Activated CD8-positive, alpha-beta T cell treated with anti-CD3 and anti-CD28 coated beads, Interleukin-2, amount 10 ng/mL, durations not matched to agents 7 days and 5 days (primary cell): ENCODE measurements at regions of chr17 and their contacts with region 1.

Region 1: DNA sequence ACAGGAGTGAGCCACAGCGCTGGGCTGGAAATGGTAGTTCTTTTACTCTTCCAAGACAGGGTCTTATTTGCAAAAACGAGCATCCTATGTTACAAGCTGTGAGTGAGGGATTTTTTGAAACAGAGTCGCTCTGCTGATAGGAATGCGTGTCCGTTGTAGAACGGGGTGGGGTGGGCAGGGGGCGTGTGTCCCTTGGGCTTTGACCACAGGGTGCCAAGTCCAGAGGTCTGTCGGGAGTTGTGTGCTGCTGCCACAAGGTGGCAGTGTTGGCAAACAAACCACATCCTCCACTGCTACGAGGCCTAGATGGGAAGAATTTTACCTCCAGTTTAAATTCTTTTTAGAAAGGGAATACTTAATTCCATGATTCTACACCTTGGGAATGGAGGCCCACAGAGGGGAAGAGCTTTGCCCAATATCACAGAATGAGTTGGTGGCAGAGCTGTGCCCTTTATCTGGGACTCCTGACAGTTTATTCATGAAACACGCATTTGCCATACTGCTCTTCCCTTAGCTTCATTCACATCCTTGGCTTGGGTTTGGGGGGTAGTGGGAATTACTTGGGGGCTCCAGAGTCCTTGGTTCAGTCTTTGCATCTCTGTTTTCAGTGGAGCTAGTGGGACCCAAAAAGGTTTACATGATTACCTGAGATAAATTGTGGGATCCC is 30.6 kb upstream of the ETV4 start:
- DNase-seq: peak; percentile 74
- ATAC-seq: peak; percentile 83
- H3K4me3 Mint-ChIP-seq: no peak overlapping the region
- H3K27ac Mint-ChIP-seq: no peak overlapping the region
- H3K4me1 Mint-ChIP-seq: peaks cover 24% of the 10 kb centered on the region
- H3K27me3 Mint-ChIP-seq: peaks cover 4% of the 10 kb centered on the region

Region 2: DNA sequence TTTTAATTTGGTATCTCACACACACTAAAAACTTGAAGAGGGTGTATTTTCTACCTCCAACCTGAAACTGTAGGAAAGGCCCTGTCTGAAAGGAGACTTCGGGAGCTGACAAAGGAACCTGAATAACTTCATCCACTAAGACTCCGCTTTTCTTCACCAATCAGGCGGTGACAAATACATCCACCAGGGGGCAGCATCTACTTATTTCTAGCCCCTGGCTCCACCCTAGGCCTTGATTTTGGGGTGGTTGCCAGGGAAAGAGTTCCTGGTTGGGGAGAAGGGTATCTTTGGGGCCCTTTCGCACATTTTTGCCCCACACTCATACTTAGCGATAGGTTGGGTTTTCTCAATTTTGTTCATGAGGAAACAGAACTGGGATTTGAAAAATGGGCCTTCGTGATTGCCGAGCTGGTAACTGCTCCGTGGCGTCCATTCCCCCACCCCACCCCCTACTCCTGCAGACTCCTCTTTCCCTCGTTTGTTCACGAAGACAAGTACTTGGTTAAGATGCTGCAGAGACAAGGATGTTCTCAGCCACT is 182.7 kb before region 1 on chr17:
- CTCF ChIA-PET with region 1: interaction called, 10 read pairs
- POLR2A ChIA-PET with region 1: no interaction called
- DNase-seq: peak; percentile 95
- ATAC-seq: peak; percentile 61
- H3K4me3 Mint-ChIP-seq: no peak overlapping the region
- H3K27ac Mint-ChIP-seq: peak overlapping the region; percentile 10
- H3K4me1 Mint-ChIP-seq: peaks cover 47% of the 10 kb centered on the region
- H3K27me3 Mint-ChIP-seq: no peaks in the 10 kb centered on the region

Region 3: DNA sequence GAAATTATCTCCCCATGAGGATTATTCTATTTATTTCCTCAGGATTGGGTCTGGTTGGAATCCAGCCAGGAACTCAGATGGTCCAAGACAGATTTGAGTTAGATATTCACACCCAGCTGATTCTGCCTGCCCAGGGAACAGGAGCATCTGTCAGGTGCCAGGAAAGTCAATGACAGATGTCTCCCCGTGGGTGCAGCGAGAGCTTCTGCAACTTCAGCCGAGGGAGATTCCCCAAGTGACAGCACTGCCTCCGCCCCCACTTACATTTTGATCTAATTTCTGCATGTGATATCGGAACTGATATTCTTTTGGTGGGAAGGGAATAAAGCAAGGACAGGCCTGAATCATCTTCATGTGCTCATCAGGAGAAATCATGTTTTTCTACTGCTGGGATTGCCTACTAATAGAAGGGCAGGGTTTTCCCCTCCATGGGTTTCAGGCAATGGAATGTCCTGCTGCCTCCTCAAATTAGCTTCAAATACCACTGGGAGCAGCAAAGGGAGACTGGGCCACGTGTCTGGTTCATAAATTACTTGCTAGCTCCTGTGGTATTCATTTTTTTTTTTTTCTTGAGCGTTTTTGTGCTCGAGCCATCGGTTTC is 108.6 kb before region 1 on chr17:
- CTCF ChIA-PET with region 1: no interaction called
- POLR2A ChIA-PET with region 1: no interaction called
- DNase-seq: no peak
- ATAC-seq: no peak
- H3K4me3 Mint-ChIP-seq: no peak overlapping the region
- H3K27ac Mint-ChIP-seq: no peak overlapping the region
- H3K4me1 Mint-ChIP-seq: no peaks in the 10 kb centered on the region
- H3K27me3 Mint-ChIP-seq: peaks cover 12% of the 10 kb centered on the region

Region 4: GRCh38 chr17:43553480-43554006 is 23.2 kb before region 1 on chr17:
- CTCF ChIA-PET with region 1: no interaction called
- POLR2A ChIA-PET with region 1: no interaction called
- DNase-seq: no peak
- ATAC-seq: no peak
- H3K4me3 Mint-ChIP-seq: no peak overlapping the region
- H3K27ac Mint-ChIP-seq: no peak overlapping the region
- H3K4me1 Mint-ChIP-seq: peaks cover 6% of the 10 kb centered on the region
- H3K27me3 Mint-ChIP-seq: peaks cover 26% of the 10 kb centered on the region

Region 5: GRCh38 chr17:43604549-43604948 is 27.9 kb after region 1 on chr17:
- CTCF ChIA-PET with region 1: interaction called, 13 read pairs
- POLR2A ChIA-PET with region 1: no interaction called
- DNase-seq: no peak
- ATAC-seq: no peak
- H3K4me3 Mint-ChIP-seq: no peak overlapping the region
- H3K27ac Mint-ChIP-seq: no peak overlapping the region
- H3K4me1 Mint-ChIP-seq: no peaks in the 10 kb centered on the region
- H3K27me3 Mint-ChIP-seq: peaks cover 2% of the 10 kb centered on the region

Region 6: DNA sequence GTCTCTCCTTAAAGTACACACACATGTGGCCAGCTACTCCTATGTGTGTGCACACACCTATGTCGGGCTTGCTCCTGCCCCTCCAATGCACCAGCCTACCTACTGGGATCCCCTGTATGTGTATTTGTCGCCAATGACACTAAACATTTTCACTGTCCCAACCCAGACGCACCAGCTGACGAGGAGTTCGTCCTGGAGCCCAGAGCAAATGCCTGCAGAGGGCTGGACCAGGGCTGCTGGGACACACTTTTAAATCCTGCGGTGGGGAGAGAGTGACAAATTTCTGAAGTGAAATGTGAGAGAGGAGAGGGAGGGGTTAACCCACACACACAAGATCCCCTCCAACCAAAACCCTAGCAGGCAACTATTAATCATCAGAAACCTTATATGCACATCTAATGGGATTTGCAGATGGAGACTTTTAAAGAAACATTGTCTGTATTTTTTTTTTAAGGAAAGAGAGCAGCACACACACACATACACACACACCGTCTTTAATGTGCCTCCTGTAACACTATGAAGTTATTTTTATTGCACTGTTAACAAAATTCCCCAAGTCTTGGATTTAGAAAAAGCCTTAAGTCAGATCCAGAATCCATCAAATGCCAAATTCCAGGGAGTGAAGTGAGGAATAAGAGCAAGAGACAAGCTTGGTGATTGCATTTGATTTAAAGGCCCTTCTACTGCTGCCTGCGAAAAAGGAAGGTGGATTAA is 85.2 kb after region 1 on chr17 and contains the start of gene MEOX1:
- CTCF ChIA-PET with region 1: interaction called, 243 read pairs
- POLR2A ChIA-PET with region 1: no interaction called
- DNase-seq: peak; percentile 30
- ATAC-seq: peak; percentile 47
- H3K4me3 Mint-ChIP-seq: peak within 1 kb of the TSS; percentile 62
- H3K27ac Mint-ChIP-seq: peak within 1 kb of the TSS; percentile 57
- H3K4me1 Mint-ChIP-seq: peaks cover 31% of the 10 kb centered on the region
- H3K27me3 Mint-ChIP-seq: peaks cover 3% of the 10 kb centered on the region
- total RNA-seq, gene MEOX1: 5.4 to 6.9 TPM

Region 7: GRCh38 chr17:43683928-43684653 is 107.4 kb after region 1 on chr17:
- CTCF ChIA-PET with region 1: interaction called, 23 read pairs
- POLR2A ChIA-PET with region 1: no interaction called
- DNase-seq: no peak
- ATAC-seq: no peak
- H3K4me3 Mint-ChIP-seq: no peak overlapping the region
- H3K27ac Mint-ChIP-seq: no peak overlapping the region
- H3K4me1 Mint-ChIP-seq: no peaks in the 10 kb centered on the region
- H3K27me3 Mint-ChIP-seq: peaks cover 13% of the 10 kb centered on the region

Region 8: GRCh38 chr17:43760254-43760852 is 183.7 kb after region 1 on chr17:
- CTCF ChIA-PET with region 1: interaction called, 43 read pairs
- POLR2A ChIA-PET with region 1: no interaction called
- DNase-seq: peak; percentile 94
- ATAC-seq: peak; percentile 95
- H3K4me3 Mint-ChIP-seq: no peak overlapping the region
- H3K27ac Mint-ChIP-seq: no peak overlapping the region
- H3K4me1 Mint-ChIP-seq: peaks cover 2% of the 10 kb centered on the region
- H3K27me3 Mint-ChIP-seq: peaks cover 24% of the 10 kb centered on the region